ENCODE measurements at regions of chr15 and their contacts with region 1.

Region 1: DNA sequence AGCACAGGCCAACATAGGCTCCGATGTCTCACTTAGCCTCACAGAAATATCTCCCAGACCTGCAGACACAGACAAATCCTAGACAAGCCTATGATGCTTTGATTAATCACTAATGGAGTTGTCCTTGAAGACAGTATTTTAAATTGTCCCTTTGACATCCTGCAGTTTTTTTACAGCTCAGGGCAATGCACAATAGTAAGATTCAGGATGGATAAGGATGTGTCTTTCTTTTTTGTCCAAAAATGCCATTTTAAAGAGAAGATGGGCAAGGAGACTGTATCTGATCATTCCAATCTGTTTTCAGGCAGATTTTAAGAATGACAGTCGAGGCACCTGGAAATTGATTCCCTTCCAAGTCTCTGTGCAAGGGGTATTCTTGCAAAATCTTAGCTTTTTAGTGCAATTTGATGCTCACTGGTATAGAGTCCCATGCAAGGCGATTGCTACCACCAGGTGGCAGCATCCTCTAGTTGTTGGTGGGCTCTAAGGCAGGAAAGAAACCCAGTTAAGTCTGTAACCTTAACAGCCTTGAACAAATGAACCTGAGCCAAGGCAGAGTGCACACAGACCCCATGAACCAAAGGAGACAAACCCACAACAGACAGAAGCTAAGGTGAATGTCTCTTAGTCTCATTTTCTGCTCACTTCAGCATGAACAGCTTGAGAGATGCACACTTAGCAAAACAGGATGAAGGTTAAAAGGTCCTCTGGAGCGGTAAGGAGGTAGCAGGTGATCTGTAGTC is 51.2 kb upstream of the MINAR1 start:
- DNase-seq: peak; percentile 39 to 76 (median 61)
- H3K4me3 ChIP-seq: no peak overlapping the region
- H3K4me3 Mint-ChIP-seq: no peak overlapping the region
- H3K27ac ChIP-seq: no peak overlapping the region
- H3K27ac Mint-ChIP-seq: no peak overlapping the region
- H3K4me1 ChIP-seq: no peaks in the 10 kb centered on the region
- H3K4me1 Mint-ChIP-seq: peaks cover 0 to 4% (median 0%) of the 10 kb centered on the region in 3 donors
- H3K27me3 ChIP-seq: no peaks in the 10 kb centered on the region
- H3K27me3 Mint-ChIP-seq: peaks cover 0 to 2% of the 10 kb centered on the region in 2 donors

Region 2: GRCh38 chr15:79322945-79323344 is 58.0 kb before region 1 on chr15:
- CTCF ChIA-PET with region 1: no interaction called
- POLR2A ChIA-PET with region 1: no interaction called
- DNase-seq: no peak
- H3K4me3 ChIP-seq: no peak overlapping the region
- H3K4me3 Mint-ChIP-seq: no peak overlapping the region
- H3K27ac ChIP-seq: no peak overlapping the region
- H3K27ac Mint-ChIP-seq: no peak overlapping the region
- H3K4me1 ChIP-seq: no peaks in the 10 kb centered on the region
- H3K4me1 Mint-ChIP-seq: peaks cover 26 to 31% (median 27%) of the 10 kb centered on the region in 3 donors
- H3K27me3 ChIP-seq: no peaks in the 10 kb centered on the region
- H3K27me3 Mint-ChIP-seq: no peaks in the 10 kb centered on the region

Region 3: DNA sequence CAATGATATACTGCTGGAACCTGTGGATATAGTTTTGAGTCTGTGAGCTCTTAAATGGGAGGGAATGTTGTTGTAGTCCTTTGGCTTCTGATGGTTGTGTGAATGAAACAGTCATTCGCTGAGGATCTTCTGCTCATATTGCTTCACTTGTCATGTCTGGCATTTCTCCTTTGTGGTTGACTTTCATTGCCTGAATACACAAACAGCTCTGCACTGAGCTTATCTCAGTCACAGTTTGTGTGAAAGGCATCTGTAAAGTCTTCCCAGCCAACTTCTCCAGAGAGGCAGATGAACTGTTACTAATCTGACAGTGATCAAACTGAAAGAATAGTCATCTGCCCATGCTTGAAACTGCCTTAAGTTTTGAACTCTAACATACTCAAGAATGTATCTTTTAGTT is 10.2 kb before region 1 on chr15:
- CTCF ChIA-PET with region 1: interaction called, 19 read pairs
- POLR2A ChIA-PET with region 1: no interaction called
- DNase-seq: no peak
- H3K4me3 ChIP-seq: no peak overlapping the region
- H3K4me3 Mint-ChIP-seq: no peak overlapping the region
- H3K27ac ChIP-seq: no peak overlapping the region
- H3K27ac Mint-ChIP-seq: no peak overlapping the region
- H3K4me1 ChIP-seq: no peaks in the 10 kb centered on the region
- H3K4me1 Mint-ChIP-seq: no peaks in the 10 kb centered on the region
- H3K27me3 ChIP-seq: no peaks in the 10 kb centered on the region
- H3K27me3 Mint-ChIP-seq: no peaks in the 10 kb centered on the region

Region 4: DNA sequence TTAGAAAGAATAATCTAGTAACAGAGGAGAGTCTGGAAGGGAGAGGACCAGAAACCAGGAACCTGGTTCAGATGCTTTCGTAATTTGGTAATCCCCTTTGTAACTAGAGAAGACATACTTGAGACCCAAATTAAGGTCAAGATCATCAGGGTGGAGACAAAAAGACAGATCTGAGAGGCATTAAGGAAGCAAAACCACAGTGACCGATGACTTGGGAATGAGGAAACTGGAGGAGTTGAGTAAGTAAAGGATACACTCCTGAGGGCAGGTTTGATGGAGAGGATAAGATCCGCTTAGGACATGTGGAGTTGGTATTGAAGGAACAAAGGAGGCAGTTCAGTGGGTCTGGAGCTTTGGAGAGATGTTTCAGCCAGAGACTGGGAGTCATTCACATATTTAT is 613.7 kb after region 1 on chr15:
- CTCF ChIA-PET with region 1: interaction called, 44 read pairs
- POLR2A ChIA-PET with region 1: no interaction called
- DNase-seq: no peak
- H3K4me3 ChIP-seq: no peak overlapping the region
- H3K4me3 Mint-ChIP-seq: no peak overlapping the region
- H3K27ac ChIP-seq: no peak overlapping the region
- H3K27ac Mint-ChIP-seq: no peak overlapping the region
- H3K4me1 ChIP-seq: no peaks in the 10 kb centered on the region
- H3K4me1 Mint-ChIP-seq: peaks cover 3 to 5% (median 3%) of the 10 kb centered on the region in 3 donors
- H3K27me3 ChIP-seq: no peaks in the 10 kb centered on the region
- H3K27me3 Mint-ChIP-seq: peaks cover 5 to 9% of the 10 kb centered on the region in 2 donors

Region 5: DNA sequence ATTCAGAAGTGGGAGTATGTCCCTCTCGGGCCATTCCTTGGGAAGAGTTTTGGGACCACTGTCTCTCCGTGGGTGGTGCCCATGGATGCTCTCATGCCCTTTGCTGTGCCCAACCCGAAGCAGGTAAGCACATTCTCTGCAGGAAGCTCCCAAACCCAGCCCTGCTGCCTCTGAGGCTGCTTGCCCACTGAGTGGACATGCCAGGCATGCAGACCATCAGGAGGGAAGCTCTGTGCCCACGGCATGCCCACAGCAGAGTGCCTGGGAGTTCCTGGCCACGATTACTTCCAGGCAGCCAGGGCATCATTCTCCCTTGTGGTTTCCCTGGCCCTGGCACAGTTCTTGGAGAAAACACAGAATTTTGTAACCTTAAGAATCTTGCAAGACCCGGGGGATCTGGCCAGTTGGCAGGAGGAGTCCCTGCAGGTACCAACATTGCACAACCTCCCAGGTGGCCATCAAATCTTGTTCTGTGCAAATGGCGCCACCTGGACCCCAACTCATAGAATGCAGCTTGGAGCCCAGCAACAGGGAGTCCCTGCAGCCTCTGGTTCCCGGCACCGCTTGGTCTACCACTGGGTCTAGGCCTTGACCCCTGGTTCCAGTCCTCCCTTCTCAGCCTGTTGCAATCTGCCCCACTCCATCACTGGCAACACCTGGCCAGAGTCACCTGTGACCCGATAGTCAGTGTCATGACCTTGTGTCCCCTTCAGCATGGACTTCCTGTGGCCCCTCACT is 792.3 kb after region 1 on chr15:
- CTCF ChIA-PET with region 1: interaction called, 22 read pairs
- POLR2A ChIA-PET with region 1: no interaction called
- DNase-seq: peak; percentile 34 to 72 (median 47)
- H3K4me3 ChIP-seq: no peak overlapping the region
- H3K4me3 Mint-ChIP-seq: no peak overlapping the region
- H3K27ac ChIP-seq: no peak overlapping the region
- H3K27ac Mint-ChIP-seq: peak overlapping the region in 1 of 8 donors; percentile 60
- H3K4me1 ChIP-seq: no peaks in the 10 kb centered on the region
- H3K4me1 Mint-ChIP-seq: no peaks in the 10 kb centered on the region
- H3K27me3 ChIP-seq: no peaks in the 10 kb centered on the region
- H3K27me3 Mint-ChIP-seq: peaks cover 0 to 4% of the 10 kb centered on the region in 2 donors

Measured in CD8-positive, alpha-beta memory T cell (primary cell).